ENCODE measurements at regions of chr15 and their contacts with region 1.

Region 1: DNA sequence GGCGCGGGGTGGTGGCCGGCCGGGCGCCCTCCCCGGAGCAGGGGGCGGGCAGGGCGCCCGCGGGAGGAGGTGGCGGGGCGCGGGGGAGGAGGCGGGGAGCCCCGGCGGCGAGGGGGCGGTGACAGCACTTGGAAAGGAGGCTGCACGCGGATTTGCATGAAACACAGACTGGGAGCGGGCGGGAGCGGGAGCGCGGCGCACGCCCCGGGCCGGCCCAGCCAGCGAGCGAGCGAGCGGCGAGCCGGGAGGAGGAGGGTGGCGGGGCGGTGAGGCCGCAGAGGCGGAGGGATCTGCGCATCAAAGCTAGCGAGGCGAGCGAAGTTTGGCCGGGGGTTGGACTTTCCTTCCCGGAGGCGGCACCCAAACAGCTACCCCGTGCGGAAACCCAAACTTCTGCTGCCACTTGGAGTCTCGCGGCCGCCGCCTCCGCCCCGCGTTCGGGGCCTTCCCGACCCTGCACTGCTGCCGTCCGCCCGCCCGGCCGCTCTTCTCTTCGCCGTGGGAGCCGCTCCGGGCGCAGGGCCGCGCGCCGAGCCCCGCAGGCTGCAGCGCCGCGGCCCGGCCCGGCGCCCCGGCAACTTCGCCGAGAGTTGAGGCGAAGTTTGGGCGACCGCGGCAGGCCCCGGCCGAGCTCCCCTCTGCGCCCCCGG is at the start of gene SMAD3:
- DNase-seq: peak; percentile 96
- H3K4me3 ChIP-seq: peak within 1 kb of the TSS; percentile 55 to 90 (median 83)
- H3K27ac ChIP-seq: peak within 1 kb of the TSS; percentile 88 to 96 (median 94)
- H3K4me1 ChIP-seq: peaks cover 0 to 43% (median 37%) of the 10 kb centered on the region in 4 donors
- H3K27me3 ChIP-seq: no peaks in the 10 kb centered on the region
- CTCF ChIP-seq: no peak
- EP300 ChIP-seq: no peak
- POLR2A ChIP-seq: peak in 1 of 2 donors; percentile 42
- total RNA-seq, gene SMAD3: 17.8 to 28.2 (median 18.4) TPM

Region 2: GRCh38 chr15:66946578-66947164 is 118.9 kb before region 1 on chr15:
- intact Hi-C with region 1: loop called (anchors 10 kb)
- DNase-seq: peak; percentile 75
- H3K4me3 ChIP-seq: no peak overlapping the region
- H3K27ac ChIP-seq: no peak overlapping the region
- H3K4me1 ChIP-seq: peaks cover 0 to under 1% (median 0%) of the 10 kb centered on the region in 4 donors
- H3K27me3 ChIP-seq: no peaks in the 10 kb centered on the region
- CTCF ChIP-seq: peak; percentile 87 to 93 (median 92)
- EP300 ChIP-seq: no peak
- POLR2A ChIP-seq: no peak

Region 3: DNA sequence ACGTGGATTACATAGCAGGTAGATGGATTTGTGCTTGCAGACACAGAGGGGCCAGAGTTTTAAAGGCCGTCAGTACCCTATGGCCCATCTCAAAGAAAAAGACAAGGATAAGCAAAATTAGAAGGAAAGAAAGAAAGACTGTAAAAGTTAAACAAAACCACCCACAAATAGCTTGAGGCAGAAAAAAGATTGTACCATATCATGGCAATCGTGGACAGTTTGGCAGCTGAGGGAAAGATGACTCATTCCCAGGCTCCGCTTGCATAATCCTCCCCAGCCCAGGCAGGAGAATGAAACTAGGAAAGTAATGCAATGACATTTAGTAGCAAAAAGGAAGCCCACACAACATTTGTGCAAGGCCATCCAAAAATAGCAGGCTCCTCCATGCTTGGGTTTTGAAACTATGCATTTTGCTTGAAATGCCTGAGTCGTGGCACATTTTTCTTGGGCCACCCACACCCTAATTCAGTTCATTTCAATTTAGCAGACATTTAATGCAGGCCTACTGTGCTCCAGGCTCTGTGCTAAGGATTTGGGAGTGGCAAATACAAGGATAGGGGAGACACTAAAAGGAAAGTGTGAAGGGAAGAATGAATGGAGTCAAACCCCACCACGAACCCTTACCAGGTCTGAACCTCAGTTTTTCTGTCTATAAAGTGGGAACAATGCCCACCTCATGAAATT is 41.1 kb before region 1 on chr15:
- intact Hi-C with region 1: loop called (anchors 1 kb)
- DNase-seq: peak; percentile 92
- H3K4me3 ChIP-seq: no peak overlapping the region
- H3K27ac ChIP-seq: peak overlapping the region; percentile 63 to 82 (median 78)
- H3K4me1 ChIP-seq: peaks cover 3 to 37% (median 33%) of the 10 kb centered on the region in 4 donors
- H3K27me3 ChIP-seq: no peaks in the 10 kb centered on the region
- CTCF ChIP-seq: no peak
- EP300 ChIP-seq: peak in 1 of 4 donors; percentile 53
- POLR2A ChIP-seq: no peak

Region 4: DNA sequence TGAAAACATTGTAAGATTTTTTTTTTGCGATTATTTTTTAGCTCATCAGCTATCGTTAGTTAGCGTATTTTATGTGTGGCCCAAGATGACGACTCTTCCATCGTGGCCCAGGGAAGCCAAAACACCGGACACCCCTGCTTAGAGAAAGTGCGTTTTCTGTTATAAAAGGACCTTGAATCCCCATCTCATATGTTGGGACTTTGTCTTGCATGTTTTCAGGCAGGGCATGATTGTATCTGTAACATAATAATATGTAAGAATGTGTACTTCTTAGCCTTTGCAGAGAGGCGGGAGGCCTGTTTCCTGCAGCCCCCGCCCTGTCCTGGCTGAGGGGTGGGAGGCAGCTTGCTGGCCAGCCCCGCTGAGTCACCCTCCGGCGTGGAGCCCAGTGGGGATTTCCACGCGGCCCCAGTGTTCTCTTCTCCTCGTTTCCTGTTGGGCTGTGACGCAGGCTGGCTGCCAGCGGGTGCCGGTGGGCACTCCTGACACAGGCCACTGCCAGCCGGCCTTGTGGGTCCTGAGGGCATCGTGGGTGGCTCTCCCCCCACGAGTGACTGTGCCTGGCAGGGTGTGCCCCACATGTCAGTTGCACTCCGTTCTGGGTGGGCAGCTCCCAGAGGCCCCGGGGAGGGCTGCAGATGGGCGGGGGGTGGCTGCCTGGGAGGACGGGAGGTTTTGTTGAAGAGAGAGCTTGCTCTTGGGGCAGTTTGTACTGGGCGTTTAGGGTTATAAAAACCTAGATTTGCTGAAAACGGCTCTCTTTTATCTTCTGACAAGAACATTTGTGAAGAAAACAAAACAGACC is 55.5 kb after region 1 on chr15:
- intact Hi-C with region 1: no loop called
- DNase-seq: peak; percentile 96
- H3K4me3 ChIP-seq: peak overlapping the region in 3 of 4 donors; percentile 30 to 39 (median 38)
- H3K27ac ChIP-seq: peak overlapping the region; percentile 81 to 87 (median 84)
- H3K4me1 ChIP-seq: peaks cover 0 to 74% (median 60%) of the 10 kb centered on the region in 4 donors
- H3K27me3 ChIP-seq: no peaks in the 10 kb centered on the region
- CTCF ChIP-seq: no peak
- EP300 ChIP-seq: peak in 1 of 4 donors; percentile 83
- POLR2A ChIP-seq: no peak

Region 5: GRCh38 chr15:67146875-67147381 is 81.4 kb after region 1 on chr15:
- intact Hi-C with region 1: loop called (anchors 5 kb)
- DNase-seq: peak; percentile 80
- H3K4me3 ChIP-seq: no peak overlapping the region
- H3K27ac ChIP-seq: peak overlapping the region; percentile 80 to 90 (median 84)
- H3K4me1 ChIP-seq: peaks cover 0 to 88% (median 79%) of the 10 kb centered on the region in 4 donors
- H3K27me3 ChIP-seq: no peaks in the 10 kb centered on the region
- CTCF ChIP-seq: no peak
- EP300 ChIP-seq: peak in 2 of 4 donors; percentile 17 to 45
- POLR2A ChIP-seq: no peak

Region 6: GRCh38 chr15:67188551-67189218 is 123.1 kb after region 1 on chr15:
- intact Hi-C with region 1: loop called (anchors 5 kb)
- DNase-seq: peak; percentile 88
- H3K4me3 ChIP-seq: no peak overlapping the region
- H3K27ac ChIP-seq: peak overlapping the region; percentile 74 to 87 (median 80)
- H3K4me1 ChIP-seq: peaks cover 0 to 77% (median 74%) of the 10 kb centered on the region in 4 donors
- H3K27me3 ChIP-seq: no peaks in the 10 kb centered on the region
- CTCF ChIP-seq: no peak
- EP300 ChIP-seq: peak in 2 of 4 donors; percentile 53 to 55
- POLR2A ChIP-seq: no peak

Measured in sigmoid colon (tissue), 7 donors.